AG04449 (cell line): ENCODE measurements at regions of chr17 and their contacts with region 1.

Region 1: GRCh38 chr17:18203308-18203707 is 19.7 kb downstream of the ALKBH5 start:
- DNase-seq: no peak
- H3K4me3 ChIP-seq: no peak overlapping the region
- CTCF ChIP-seq: no peak

Region 2: DNA sequence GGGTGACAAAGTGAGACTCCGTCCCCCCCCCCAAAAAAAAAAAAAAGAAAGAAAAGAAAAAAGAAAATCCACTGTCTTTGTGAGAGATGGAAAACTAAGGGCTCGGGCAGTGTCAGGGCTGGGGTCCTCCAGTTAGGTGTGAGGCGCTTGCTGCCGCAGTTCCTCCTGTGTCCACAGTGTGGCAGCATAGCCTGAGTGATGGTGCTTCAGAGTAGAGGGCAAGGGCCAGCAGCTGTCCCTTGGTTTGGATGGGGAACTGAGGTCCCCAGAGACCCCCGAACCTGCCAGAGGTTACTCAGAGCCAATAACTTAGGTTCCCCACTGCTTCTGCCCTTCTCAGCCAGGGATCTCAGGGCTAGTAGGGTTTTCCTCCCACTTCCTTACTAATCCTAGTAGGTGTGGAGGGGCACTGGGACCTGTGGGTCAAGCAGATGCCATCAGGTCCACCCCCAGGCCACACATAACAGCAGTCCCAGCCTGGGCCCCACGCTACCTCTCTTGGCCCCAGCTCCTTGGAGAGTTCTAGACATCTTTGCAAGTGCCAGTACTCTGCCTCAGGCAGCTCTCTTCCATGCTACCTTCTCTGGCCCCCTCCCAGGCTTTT is 14.2 kb after region 1 on chr17:
- CTCF ChIA-PET with region 1: interaction called, 49 read pairs
- POLR2A ChIA-PET with region 1: interaction called, 3 read pairs
- DNase-seq: no peak
- H3K4me3 ChIP-seq: no peak overlapping the region
- CTCF ChIP-seq: peak; percentile 94

Region 3: GRCh38 chr17:18260332-18261144 is 57.2 kb after region 1 on chr17 and contains the start of gene MIEF2:
- CTCF ChIA-PET with region 1: no interaction called
- POLR2A ChIA-PET with region 1: no interaction called
- DNase-seq: peak; percentile 45
- H3K4me3 ChIP-seq: peak within 1 kb of the TSS; percentile 93
- CTCF ChIP-seq: no peak